ENCODE measurements at regions of chr11 and their contacts with region 1.

Region 1: DNA sequence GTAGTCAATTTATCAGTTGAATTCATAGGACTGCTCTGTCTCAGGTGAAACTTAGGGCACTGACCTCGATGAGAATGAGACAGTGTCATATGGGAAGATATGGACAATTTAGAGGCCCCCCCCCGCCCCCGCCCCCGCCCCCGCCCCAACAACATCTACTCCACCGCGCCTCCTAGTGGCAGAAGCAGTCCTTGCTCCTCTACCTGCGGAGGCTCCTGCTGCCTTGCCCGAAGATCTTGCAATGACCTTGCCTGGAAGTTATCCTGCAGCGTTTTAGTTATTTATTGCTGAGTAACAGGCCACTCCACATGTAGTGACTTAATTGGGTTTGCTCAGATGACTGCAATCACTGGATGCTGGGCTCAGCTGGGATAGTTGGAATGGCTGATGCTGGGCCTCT is 15.2 kb downstream of the SERPINH1 start:
- DNase-seq: peak; percentile 68
- ATAC-seq: peak; percentile 50
- H3K4me3 ChIP-seq: no peak overlapping the region
- H3K27ac ChIP-seq: no peak overlapping the region
- H3K4me1 ChIP-seq: peaks cover under 1% of the 10 kb centered on the region; the same call in 1 of the 2 replicates
- H3K27me3 ChIP-seq: no peaks in the 10 kb centered on the region
- CTCF ChIP-seq: peak; percentile 57

Region 2: GRCh38 chr11:75547580-75548058 is 29.6 kb before region 1 on chr11:
- CTCF ChIA-PET with region 1: no interaction called
- POLR2A ChIA-PET with region 1: no interaction called
- intact Hi-C with region 1: loop called (anchors 1 kb)
- DNase-seq: peak; percentile 82
- ATAC-seq: peak; percentile 95
- H3K4me3 ChIP-seq: no peak overlapping the region
- H3K27ac ChIP-seq: no peak overlapping the region
- H3K4me1 ChIP-seq: no peaks in the 10 kb centered on the region
- H3K27me3 ChIP-seq: no peaks in the 10 kb centered on the region
- CTCF ChIP-seq: peak; percentile 97

Region 3: DNA sequence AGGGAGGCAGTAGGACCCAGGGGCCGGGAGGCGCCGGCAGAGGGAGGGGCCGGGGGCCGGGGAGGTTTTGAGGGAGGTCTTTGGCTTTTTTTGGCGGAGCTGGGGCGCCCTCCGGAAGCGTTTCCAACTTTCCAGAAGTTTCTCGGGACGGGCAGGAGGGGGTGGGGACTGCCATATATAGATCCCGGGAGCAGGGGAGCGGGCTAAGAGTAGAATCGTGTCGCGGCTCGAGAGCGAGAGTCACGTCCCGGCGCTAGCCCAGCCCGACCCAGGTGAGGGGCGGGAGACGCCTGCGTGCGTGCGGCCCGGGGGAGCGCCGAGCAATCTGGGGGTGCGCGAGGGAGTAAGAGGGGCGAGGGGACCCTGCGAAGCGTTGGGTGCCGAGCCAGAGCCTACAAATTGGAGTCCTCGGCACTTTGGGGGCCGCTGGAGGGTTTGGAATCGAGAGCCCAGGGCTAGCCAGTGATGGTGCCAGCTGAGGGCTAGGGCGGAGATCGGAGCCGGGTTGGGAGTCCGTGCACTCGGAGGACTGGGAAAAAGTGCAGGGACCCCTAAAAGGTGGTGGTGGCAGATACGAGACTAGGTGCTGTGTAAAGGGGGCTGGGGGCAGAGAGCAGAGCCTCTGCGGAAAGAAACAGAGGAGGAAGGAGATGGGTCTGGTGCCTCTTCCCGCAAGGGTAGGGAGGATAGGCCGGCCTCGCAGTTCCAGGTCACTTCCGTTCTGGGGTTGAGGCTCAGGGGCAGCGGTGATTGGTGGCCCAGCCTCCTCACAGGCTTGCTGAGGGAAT is 15.0 kb before region 1 on chr11 and contains the start of gene SERPINH1:
- CTCF ChIA-PET with region 1: no interaction called
- POLR2A ChIA-PET with region 1: interaction called, 11 read pairs
- intact Hi-C with region 1: no loop called
- DNase-seq: peak; percentile 88
- ATAC-seq: peak; percentile 88
- H3K4me3 ChIP-seq: peak within 1 kb of the TSS; percentile 80
- H3K27ac ChIP-seq: peak within 1 kb of the TSS; percentile 43
- H3K4me1 ChIP-seq: peaks cover 31% of the 10 kb centered on the region
- H3K27me3 ChIP-seq: no peaks in the 10 kb centered on the region
- CTCF ChIP-seq: no peak
- total RNA-seq, gene SERPINH1: 117 and 121 TPM in 2 replicates

Measured in PC-3 (cell line).